Esophagus squamous epithelium (tissue), 5 donors: ENCODE measurements at regions of chr9 and their contacts with region 1.

Region 1: GRCh38 chr9:37119907-37120842 is at the start of gene ZCCHC7:
- DNase-seq: peak; percentile 79
- H3K4me3 ChIP-seq: peak within 1 kb of the TSS; percentile 80 to 97 (median 90)
- H3K27ac ChIP-seq: peak within 1 kb of the TSS; percentile 87 to 97 (median 96)
- H3K4me1 ChIP-seq: peaks cover 0 to 35% (median 6%) of the 10 kb centered on the region in 3 donors
- H3K27me3 ChIP-seq: no peaks in the 10 kb centered on the region
- CTCF ChIP-seq: no peak
- POLR2A ChIP-seq: peak in 3 of 4 donors; percentile 50 to 92 (median 87)
- total RNA-seq, gene ZCCHC7: 6.1 to 21.6 (median 13.0) TPM

Region 2: DNA sequence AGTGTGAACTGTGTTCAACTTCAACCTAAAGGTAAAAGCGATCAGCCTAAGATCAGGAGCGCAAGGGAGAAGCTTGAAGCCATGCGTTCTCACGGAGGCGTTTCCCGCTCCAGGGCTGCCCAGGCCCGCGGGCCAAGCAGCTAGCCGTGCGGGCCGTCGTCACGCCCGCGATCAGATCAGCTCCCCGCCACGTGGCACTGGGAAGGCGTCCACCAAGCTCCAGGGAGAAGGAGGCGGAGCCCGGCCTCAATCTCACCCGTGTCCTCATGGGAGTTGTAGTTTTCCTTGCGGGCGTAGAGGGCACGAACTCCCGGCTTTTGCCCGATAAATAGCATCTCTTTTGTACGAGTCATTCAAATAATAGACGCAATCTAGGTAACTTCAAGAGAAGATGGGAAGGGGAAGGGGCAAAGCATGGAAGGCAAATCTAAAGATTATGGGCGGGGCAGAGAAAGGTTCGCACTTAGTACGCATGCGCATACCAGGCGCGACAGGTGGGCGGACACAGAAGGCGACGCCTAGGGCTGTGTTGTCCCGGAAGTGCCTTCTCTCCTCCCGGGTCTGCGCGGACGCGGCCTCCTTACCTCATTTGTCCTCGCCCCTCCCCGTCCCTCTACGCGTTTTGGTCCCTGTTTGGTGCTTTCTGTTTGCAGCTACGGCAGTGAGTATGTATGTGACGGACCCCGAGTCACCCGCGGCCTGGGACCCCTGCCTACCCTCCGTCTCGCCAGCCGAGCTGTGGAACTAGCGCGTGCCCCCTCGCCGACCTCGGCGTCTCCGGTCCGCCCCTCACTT is 40.6 kb before region 1 on chr9:
- intact Hi-C with region 1: loop called (anchors 5 kb)
- DNase-seq: peak; percentile 67
- H3K4me3 ChIP-seq: peak overlapping the region; percentile 75 to 97 (median 96)
- H3K27ac ChIP-seq: peak overlapping the region; percentile 86 to 94 (median 90)
- H3K4me1 ChIP-seq: peaks cover 0 to 38% (median 4%) of the 10 kb centered on the region in 3 donors
- H3K27me3 ChIP-seq: peaks cover 0 to 13% (median 0%) of the 10 kb centered on the region in 4 donors
- CTCF ChIP-seq: peak in 1 of 6 experiments; percentile 6
- POLR2A ChIP-seq: peak in 2 of 4 donors; percentile 77 to 80